ENCODE measurements at regions of chr7 and their contacts with region 1.

Region 1: GRCh38 chr7:142535123-142535779 is 214.0 kb upstream of the PRSS1 start:
- DNase-seq: peak; percentile 84 to 89
- H3K4me3 ChIP-seq: no peak overlapping the region
- H3K27ac ChIP-seq: no peak overlapping the region
- H3K4me1 ChIP-seq: peaks cover 31% of the 10 kb centered on the region
- H3K27me3 ChIP-seq: no peaks in the 10 kb centered on the region
- CTCF ChIP-seq: peak; percentile 98

Region 2: DNA sequence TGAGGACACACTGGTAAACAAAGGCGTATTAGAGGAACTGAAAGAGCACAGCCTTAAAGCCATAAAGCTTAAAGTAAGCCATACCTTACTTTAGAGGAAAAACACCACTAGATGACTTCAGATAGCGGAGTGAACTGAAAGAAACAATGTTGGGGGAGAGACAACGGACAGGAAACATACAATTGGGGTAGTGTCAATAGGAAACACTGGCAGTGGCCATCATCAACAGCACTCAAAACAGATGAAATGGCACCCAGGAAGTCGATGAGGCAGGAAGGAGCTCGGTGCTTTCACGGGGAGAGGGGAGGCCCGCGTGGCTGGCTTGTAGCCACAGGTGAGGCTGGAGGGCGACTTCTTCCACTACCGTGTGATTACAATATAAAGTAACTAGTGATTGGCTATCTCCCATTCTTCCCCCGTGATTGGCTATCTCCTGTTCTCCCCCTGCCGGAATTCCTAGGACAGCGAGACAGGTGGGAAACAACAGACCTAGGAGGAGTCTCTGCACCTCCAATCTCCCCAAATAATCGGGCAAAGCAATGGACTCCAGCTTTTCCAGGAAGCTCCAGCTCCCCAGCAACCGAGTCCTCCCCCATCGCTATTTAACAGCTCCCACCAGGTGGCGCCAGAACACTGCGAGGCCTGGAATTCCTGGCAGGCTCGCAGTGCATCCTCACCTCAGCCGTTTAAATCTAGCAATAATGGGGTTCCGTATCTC is 559.3 kb before region 1 on chr7:
- CTCF ChIA-PET with region 1: no interaction called
- POLR2A ChIA-PET with region 1: no interaction called
- intact Hi-C with region 1: loop called (anchors 10 kb)
- DNase-seq: peak; percentile 44 to 86
- H3K4me3 ChIP-seq: no peak overlapping the region
- H3K27ac ChIP-seq: no peak overlapping the region
- H3K4me1 ChIP-seq: no peaks in the 10 kb centered on the region; the same call in 1 of the 2 replicates
- H3K27me3 ChIP-seq: no peaks in the 10 kb centered on the region
- CTCF ChIP-seq: peak; percentile 96

Region 3: DNA sequence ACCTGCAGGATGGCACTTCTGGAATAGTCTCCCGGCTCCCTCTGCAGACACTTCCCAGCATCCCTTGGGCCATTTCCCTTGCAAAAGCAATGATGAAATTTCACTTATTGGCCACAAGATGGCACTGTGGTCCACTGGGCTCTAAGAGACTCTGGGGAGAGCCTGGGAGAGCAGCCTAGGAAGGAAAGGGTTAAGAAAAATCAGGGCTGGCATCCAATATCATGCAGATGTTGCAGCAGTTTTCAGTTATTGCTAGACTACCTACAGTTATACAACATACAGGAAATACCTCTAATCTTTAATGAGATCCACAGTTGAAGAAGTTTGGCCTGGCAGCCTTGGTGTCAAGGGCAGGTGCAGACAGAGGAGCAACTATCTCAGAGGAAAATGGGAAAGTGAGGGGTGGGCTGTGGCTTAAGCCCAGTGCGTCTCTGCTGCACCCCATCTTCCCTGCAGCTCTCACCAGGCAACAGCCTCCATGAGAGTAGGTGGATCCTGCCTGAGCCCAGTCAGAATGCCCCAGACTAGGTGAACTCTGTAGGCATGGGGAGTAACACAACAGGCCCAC is 177.2 kb before region 1 on chr7:
- CTCF ChIA-PET with region 1: interaction called, 3 read pairs
- POLR2A ChIA-PET with region 1: no interaction called
- intact Hi-C with region 1: loop called (anchors 1 kb)
- DNase-seq: peak; percentile 71 to 75
- H3K4me3 ChIP-seq: peak overlapping the region; percentile 27; the same call in 1 of the 2 replicates
- H3K27ac ChIP-seq: peak overlapping the region; percentile 0; the same call in 1 of the 2 replicates
- H3K4me1 ChIP-seq: peaks cover 28% of the 10 kb centered on the region
- H3K27me3 ChIP-seq: no peaks in the 10 kb centered on the region
- CTCF ChIP-seq: peak; percentile 98

Region 4: GRCh38 chr7:142459551-142459963 is 75.7 kb before region 1 on chr7:
- CTCF ChIA-PET with region 1: interaction called, 4 read pairs
- POLR2A ChIA-PET with region 1: no interaction called
- intact Hi-C with region 1: loop called (anchors 1 kb)
- DNase-seq: peak; percentile 82 to 96
- H3K4me3 ChIP-seq: no peak overlapping the region
- H3K27ac ChIP-seq: peak overlapping the region; percentile 45
- H3K4me1 ChIP-seq: peaks cover 26% of the 10 kb centered on the region
- H3K27me3 ChIP-seq: no peaks in the 10 kb centered on the region
- CTCF ChIP-seq: peak; percentile 91

Region 5: GRCh38 chr7:142516038-142516501 is 19.2 kb before region 1 on chr7:
- CTCF ChIA-PET with region 1: interaction called, 6 read pairs
- POLR2A ChIA-PET with region 1: no interaction called
- intact Hi-C with region 1: loop called (anchors 1 kb)
- DNase-seq: peak; percentile 72 to 87
- H3K4me3 ChIP-seq: no peak overlapping the region
- H3K27ac ChIP-seq: peak overlapping the region; percentile 79
- H3K4me1 ChIP-seq: peaks cover 48% of the 10 kb centered on the region
- H3K27me3 ChIP-seq: no peaks in the 10 kb centered on the region
- CTCF ChIP-seq: peak; percentile 97

Region 6: DNA sequence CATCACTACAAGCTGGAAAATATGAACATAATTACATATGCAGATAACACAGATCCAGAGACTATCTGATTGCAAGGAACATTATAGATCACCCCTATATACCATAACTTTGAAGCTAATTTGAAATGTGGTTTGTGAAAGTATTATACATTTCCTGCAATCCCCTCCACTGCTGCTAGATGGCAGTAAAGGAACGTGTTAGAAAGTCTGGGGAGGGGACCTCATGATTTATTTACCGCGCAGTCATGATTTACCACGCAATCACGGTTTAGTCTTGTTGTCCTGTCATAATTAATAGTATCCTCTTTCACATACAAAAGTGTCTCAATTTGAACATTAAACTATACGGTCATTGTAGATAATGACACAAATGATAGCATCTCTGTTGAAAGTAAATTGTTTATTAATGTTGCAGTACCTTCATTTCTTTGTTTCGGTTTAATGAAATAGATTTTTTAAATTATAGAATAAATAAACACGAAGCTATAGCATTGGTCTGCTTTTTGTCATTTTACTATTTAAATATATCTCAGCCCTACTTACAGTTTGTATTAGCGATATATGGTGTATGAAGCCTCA is 68.7 kb after region 1 on chr7:
- CTCF ChIA-PET with region 1: interaction called, 10 read pairs
- POLR2A ChIA-PET with region 1: no interaction called
- intact Hi-C with region 1: loop called (anchors 1 kb)
- DNase-seq: peak; percentile 51 to 65
- H3K4me3 ChIP-seq: peak overlapping the region; percentile 25; the same call in 1 of the 2 replicates
- H3K27ac ChIP-seq: no peak overlapping the region
- H3K4me1 ChIP-seq: peaks cover 18% of the 10 kb centered on the region
- H3K27me3 ChIP-seq: no peaks in the 10 kb centered on the region
- CTCF ChIP-seq: peak; percentile 97

Region 7: GRCh38 chr7:142866361-142867058 is 331.3 kb after region 1 on chr7:
- CTCF ChIA-PET with region 1: no interaction called
- POLR2A ChIA-PET with region 1: no interaction called
- intact Hi-C with region 1: loop called (anchors 2 kb)
- DNase-seq: peak; percentile 36 to 59
- H3K4me3 ChIP-seq: no peak overlapping the region
- H3K27ac ChIP-seq: no peak overlapping the region
- H3K4me1 ChIP-seq: no peaks in the 10 kb centered on the region
- H3K27me3 ChIP-seq: no peaks in the 10 kb centered on the region
- CTCF ChIP-seq: peak; percentile 83

Measured in PC-9 (cell line).